Left ventricle myocardium superior (tissue), 1 donor: ENCODE measurements at regions of chr19 and their contacts with region 1.

Region 1: GRCh38 chr19:47765523-47766358 is 12.8 kb upstream of the SELENOW start:
- DNase-seq: peak; percentile 86
- ATAC-seq: peak; percentile 74

Region 2: GRCh38 chr19:47456721-47457478 is 308.8 kb before region 1 on chr19:
- intact Hi-C with region 1: no loop called
- DNase-seq: no peak
- ATAC-seq: no peak

Region 3: GRCh38 chr19:47790398-47790814 is 24.7 kb after region 1 on chr19:
- intact Hi-C with region 1: loop called (anchors 2 kb)
- DNase-seq: peak; percentile 90
- ATAC-seq: peak; percentile 70